ENCODE measurements at regions of chr15 and their contacts with region 1.

Region 1: DNA sequence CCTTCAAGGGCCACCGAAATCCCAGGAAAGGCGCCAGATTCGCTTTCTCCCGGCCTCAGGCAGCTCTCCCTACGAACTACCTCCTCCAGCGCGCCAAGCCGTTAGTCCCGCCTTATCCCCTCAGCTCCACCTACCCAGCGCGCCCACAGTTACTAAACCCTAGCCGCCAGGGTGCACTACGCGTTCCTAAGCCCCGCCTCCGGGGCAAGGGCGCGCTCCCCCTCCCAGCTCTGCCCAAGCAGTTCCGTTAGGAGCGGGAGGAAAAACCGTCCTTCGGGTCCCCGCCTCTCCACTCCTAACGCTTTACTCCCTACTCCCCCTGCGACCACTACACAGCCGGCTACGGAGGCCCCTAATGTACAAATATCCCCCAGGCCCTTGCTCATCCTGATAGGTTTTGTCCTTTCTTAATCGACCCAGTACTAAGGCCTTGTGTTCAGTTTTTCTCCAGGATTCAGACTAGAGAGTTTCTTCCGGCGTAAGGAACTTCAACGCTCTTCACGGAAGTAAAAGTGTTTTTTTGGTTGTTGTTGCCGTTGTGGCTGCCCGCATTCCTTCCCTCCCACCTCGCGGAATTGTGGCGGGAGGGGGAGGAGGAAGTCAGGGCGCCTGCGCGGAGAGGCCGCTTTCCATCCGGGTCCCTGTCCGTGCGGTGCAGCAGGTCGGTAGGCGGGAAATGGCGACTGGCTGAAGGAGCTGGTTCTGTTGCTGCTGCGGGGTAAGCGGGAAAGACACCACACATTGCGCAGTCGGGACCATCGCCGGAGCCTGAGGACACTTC is at the start of gene CTDSPL2:
- DNase-seq: peak; percentile 97 to 98
- H3K4me3 ChIP-seq: peak within 1 kb of the TSS; percentile 74
- H3K4me3 Mint-ChIP-seq: peak within 1 kb of the TSS; percentile 97
- H3K27ac Mint-ChIP-seq: peak within 1 kb of the TSS; percentile 99
- H3K4me1 ChIP-seq: peaks cover 8% of the 10 kb centered on the region
- H3K4me1 Mint-ChIP-seq: peaks cover 8% of the 10 kb centered on the region
- H3K27me3 ChIP-seq: no peaks in the 10 kb centered on the region
- H3K27me3 Mint-ChIP-seq: no peaks in the 10 kb centered on the region
- CTCF ChIP-seq: peak in 1 of 2 experiments; percentile 37
- total RNA-seq, gene CTDSPL2: 55.9 and 60.8 TPM in 2 replicates

Region 2: GRCh38 chr15:44394062-44394461 is 33.1 kb before region 1 on chr15:
- CTCF ChIA-PET with region 1: interaction called, 5 read pairs
- POLR2A ChIA-PET with region 1: interaction called, 5 read pairs
- intact Hi-C with region 1: loop called (anchors 1 kb)
- DNase-seq: peak; percentile 42 to 62
- H3K4me3 ChIP-seq: no peak overlapping the region
- H3K4me3 Mint-ChIP-seq: no peak overlapping the region
- H3K27ac Mint-ChIP-seq: peak overlapping the region; percentile 61
- H3K4me1 ChIP-seq: peaks cover 23% of the 10 kb centered on the region
- H3K4me1 Mint-ChIP-seq: peaks cover 6% of the 10 kb centered on the region
- H3K27me3 ChIP-seq: no peaks in the 10 kb centered on the region
- H3K27me3 Mint-ChIP-seq: no peaks in the 10 kb centered on the region
- CTCF ChIP-seq: no peak

Region 3: DNA sequence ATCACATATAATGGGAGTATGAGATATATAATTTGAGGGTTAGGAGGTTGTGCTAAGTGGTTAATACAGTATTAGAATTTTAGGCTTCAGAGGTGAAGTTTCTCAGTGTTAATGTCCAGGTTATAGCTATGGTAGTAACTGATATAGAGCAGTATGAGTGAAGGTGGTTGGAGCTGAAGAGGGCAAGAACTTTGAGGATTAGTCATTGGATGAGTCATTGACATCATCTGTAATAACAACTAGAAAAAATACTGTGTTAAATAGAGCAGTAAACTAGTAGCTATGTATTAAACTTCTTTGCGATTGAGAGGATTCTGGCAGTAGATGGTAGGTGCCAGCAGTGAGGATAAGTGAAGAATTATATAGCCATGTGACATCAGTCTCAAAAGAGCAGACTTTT is 62.3 kb after region 1 on chr15:
- CTCF ChIA-PET with region 1: no interaction called
- POLR2A ChIA-PET with region 1: no interaction called
- intact Hi-C with region 1: no loop called
- DNase-seq: no peak
- H3K4me3 ChIP-seq: no peak overlapping the region
- H3K4me3 Mint-ChIP-seq: no peak overlapping the region
- H3K27ac Mint-ChIP-seq: no peak overlapping the region
- H3K4me1 ChIP-seq: no peaks in the 10 kb centered on the region
- H3K4me1 Mint-ChIP-seq: no peaks in the 10 kb centered on the region
- H3K27me3 ChIP-seq: no peaks in the 10 kb centered on the region
- H3K27me3 Mint-ChIP-seq: no peaks in the 10 kb centered on the region
- CTCF ChIP-seq: no peak

Region 4: DNA sequence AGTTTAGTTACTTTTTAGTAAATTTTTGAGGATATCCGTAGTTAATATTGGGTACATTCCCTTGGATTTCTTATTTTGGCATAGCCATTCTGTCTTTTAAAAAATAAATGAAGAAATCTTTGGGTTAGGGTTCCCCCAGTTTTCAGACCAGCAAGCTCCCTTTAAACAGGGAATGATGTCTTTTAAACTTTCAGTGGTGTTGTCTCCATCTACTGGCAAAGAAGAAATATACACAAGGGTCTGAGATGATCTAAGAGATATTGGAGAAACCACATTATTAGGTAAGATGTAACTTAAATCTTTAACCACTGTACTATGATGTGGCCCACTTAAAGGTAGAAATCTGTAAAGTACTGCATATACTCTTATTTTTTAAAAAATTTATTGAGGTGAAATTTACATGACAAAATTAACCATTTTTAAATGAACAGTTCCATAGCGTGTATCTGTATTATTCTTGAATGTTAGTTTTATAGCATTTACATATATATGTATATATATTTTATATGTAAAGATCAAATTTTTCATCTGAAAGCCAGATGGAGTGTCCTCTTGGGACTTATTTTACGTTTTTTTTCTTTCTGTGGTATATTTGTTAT is 74.7 kb after region 1 on chr15:
- CTCF ChIA-PET with region 1: interaction called, 23 read pairs
- POLR2A ChIA-PET with region 1: interaction called, 3 read pairs
- intact Hi-C with region 1: loop called (anchors 2 kb)
- DNase-seq: no peak
- H3K4me3 ChIP-seq: no peak overlapping the region
- H3K4me3 Mint-ChIP-seq: no peak overlapping the region
- H3K27ac Mint-ChIP-seq: no peak overlapping the region
- H3K4me1 ChIP-seq: no peaks in the 10 kb centered on the region
- H3K4me1 Mint-ChIP-seq: no peaks in the 10 kb centered on the region
- H3K27me3 ChIP-seq: no peaks in the 10 kb centered on the region
- H3K27me3 Mint-ChIP-seq: no peaks in the 10 kb centered on the region
- CTCF ChIP-seq: peak; percentile 60 to 62

Region 5: DNA sequence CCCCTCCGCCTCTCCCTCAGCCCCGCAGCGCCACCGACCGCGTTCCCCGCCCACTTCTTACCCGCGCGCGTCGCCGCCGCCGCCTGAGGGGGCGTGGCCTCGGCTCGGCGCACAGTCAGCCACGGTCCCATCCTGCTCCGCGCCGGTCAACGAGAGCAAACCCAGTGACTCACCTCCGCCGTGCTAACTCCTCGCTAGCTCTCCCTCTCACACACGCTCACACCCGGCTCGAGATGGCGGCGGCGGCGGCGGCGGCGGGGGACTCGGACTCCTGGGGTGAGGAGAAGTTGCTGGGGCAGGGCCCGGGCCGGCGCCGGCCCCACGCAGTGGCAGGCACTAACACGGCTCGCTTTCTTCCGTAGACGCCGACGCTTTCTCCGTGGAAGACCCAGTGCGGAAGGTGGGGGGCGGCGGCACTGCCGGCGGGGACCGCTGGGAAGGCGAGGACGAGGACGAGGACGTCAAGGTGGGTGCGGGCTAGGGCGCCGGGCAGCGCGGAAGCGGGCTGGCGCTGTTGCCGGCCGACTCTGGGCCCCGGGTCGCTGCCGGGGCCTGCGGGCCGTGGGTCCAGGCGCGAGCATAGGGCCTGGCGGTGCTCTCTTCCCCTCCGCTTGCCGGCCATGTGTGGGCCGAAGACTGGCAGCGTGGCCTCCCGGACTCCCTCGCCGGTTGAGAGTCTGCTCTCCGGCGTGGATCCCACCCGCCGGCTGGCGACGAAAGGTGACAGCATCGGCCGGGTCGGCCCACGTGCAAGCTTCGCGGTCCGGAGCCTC is 110.0 kb after region 1 on chr15 and contains the start of gene EIF3J:
- CTCF ChIA-PET with region 1: interaction called, 8 read pairs
- POLR2A ChIA-PET with region 1: interaction called, 13 read pairs
- intact Hi-C with region 1: no loop called
- DNase-seq: peak; percentile 95 to 97
- H3K4me3 ChIP-seq: peak within 1 kb of the TSS; percentile 93
- H3K4me3 Mint-ChIP-seq: peak within 1 kb of the TSS; percentile 94
- H3K27ac Mint-ChIP-seq: peak within 1 kb of the TSS; percentile 90
- H3K4me1 ChIP-seq: peaks cover 4% of the 10 kb centered on the region; the same call in 1 of the 2 replicates
- H3K4me1 Mint-ChIP-seq: peaks cover 12% of the 10 kb centered on the region
- H3K27me3 ChIP-seq: no peaks in the 10 kb centered on the region
- H3K27me3 Mint-ChIP-seq: no peaks in the 10 kb centered on the region
- CTCF ChIP-seq: no peak
- total RNA-seq, gene EIF3J: 179 and 182 TPM in 2 replicates